Ascending aorta (tissue), 2 donors: ENCODE measurements at regions of chr18 and their contacts with region 1.

Region 1: GRCh38 chr18:20996418-20996817 is 115.2 kb downstream of the ROCK1 start:
- DNase-seq: no peak
- H3K4me3 ChIP-seq: no peak overlapping the region
- H3K27ac ChIP-seq: no peak overlapping the region
- H3K4me1 ChIP-seq: peaks cover 3 to 9% of the 10 kb centered on the region in 2 donors
- H3K27me3 ChIP-seq: no peaks in the 10 kb centered on the region
- CTCF ChIP-seq: no peak

Region 2: GRCh38 chr18:20960735-20961134 is 35.7 kb before region 1 on chr18:
- intact Hi-C with region 1: loop called (anchors 5 kb)
- DNase-seq: no peak
- H3K4me3 ChIP-seq: no peak overlapping the region
- H3K27ac ChIP-seq: no peak overlapping the region
- H3K4me1 ChIP-seq: no peaks in the 10 kb centered on the region
- H3K27me3 ChIP-seq: no peaks in the 10 kb centered on the region
- CTCF ChIP-seq: no peak

Region 3: GRCh38 chr18:21123290-21123926 is 127.0 kb after region 1 on chr18:
- intact Hi-C with region 1: no loop called
- DNase-seq: no peak
- H3K4me3 ChIP-seq: no peak overlapping the region
- H3K27ac ChIP-seq: no peak overlapping the region
- H3K4me1 ChIP-seq: peaks cover under 1% of the 10 kb centered on the region in 2 donors
- H3K27me3 ChIP-seq: no peaks in the 10 kb centered on the region
- CTCF ChIP-seq: no peak

Region 4: DNA sequence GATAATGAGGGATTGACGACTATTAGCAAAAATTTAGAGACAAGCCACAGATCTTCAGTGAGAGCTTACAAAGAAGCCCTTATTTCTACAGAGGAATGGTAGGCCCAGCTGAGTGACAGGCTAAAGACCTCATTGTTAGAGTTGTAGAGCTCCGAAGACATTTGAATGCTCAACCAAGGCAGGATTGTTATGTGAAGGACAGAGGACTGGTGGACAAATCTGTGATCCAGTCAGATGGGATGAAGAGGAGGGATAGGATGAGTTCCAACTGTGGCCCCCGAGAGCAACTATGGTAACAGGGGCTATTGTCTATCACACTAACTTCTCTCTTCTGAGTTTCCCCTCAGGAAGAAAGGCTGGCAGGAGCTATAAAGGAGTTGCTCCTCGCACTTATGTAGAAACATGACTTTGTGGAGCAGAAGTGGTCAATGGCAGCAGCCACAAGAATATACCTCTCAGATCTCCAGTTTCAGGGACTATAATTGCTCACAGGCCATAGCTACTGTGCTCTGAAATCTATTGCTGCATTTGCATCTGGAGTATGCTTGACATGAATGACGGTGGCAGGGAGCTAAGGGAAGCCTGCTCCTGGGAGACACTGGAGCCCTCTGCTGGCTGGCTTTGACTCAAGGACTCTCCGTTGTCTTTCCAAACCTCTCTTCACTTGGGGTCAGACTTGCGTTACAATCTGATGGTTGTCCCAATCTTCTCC is 195.3 kb after region 1 on chr18:
- intact Hi-C with region 1: no loop called
- DNase-seq: no peak
- H3K4me3 ChIP-seq: no peak overlapping the region
- H3K27ac ChIP-seq: no peak overlapping the region
- H3K4me1 ChIP-seq: no peaks in the 10 kb centered on the region
- H3K27me3 ChIP-seq: no peaks in the 10 kb centered on the region
- CTCF ChIP-seq: peak in 2 of 3 experiments; percentile 22 to 44